PC-3 (cell line): ENCODE measurements at regions of chr10 and their contacts with region 1.

Region 1: GRCh38 chr10:62582804-62583208 is 208.6 kb downstream of the ZNF365 start:
- DNase-seq: peak; percentile 86
- ATAC-seq: peak; percentile 77
- H3K4me3 ChIP-seq: no peak overlapping the region
- H3K27ac ChIP-seq: peak overlapping the region; percentile 1; the same call in 1 of the 2 replicates
- H3K4me1 ChIP-seq: peaks cover 11% of the 10 kb centered on the region
- H3K27me3 ChIP-seq: no peaks in the 10 kb centered on the region
- CTCF ChIP-seq: no peak

Region 2: DNA sequence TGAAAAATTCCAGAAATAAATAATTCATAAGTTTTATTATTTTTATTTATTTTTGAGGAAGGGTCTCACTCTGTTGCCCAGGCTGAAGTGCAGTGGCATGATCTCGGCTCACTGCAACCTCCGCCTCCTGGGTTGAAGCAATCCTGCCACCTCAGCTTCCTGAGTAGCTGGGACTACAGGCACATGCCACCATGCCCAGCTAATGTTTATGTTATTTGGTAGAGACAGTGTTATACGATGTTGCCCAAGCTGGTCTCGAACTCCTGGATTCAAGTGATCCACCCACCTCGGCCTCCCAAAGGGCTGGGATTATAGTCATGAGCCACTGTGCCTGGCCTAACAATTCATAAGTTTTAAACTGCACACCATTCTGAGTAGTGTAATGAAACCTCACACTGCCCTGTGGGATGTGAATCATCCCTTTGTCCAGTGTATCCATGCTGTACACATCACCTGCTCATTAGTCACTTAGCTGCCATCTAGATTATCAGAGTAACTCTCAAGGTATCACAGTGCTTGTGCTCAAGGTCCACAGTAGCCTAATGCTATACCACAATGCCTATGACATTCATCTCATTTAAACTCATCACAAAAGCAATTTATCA is 332.1 kb before region 1 on chr10:
- CTCF ChIA-PET with region 1: no interaction called
- POLR2A ChIA-PET with region 1: no interaction called
- intact Hi-C with region 1: loop called (anchors 2 kb)
- DNase-seq: peak; percentile 100
- ATAC-seq: peak; percentile 98
- H3K4me3 ChIP-seq: no peak overlapping the region
- H3K27ac ChIP-seq: peak overlapping the region; percentile 44
- H3K4me1 ChIP-seq: peaks cover 47% of the 10 kb centered on the region
- H3K27me3 ChIP-seq: no peaks in the 10 kb centered on the region
- CTCF ChIP-seq: no peak

Region 3: DNA sequence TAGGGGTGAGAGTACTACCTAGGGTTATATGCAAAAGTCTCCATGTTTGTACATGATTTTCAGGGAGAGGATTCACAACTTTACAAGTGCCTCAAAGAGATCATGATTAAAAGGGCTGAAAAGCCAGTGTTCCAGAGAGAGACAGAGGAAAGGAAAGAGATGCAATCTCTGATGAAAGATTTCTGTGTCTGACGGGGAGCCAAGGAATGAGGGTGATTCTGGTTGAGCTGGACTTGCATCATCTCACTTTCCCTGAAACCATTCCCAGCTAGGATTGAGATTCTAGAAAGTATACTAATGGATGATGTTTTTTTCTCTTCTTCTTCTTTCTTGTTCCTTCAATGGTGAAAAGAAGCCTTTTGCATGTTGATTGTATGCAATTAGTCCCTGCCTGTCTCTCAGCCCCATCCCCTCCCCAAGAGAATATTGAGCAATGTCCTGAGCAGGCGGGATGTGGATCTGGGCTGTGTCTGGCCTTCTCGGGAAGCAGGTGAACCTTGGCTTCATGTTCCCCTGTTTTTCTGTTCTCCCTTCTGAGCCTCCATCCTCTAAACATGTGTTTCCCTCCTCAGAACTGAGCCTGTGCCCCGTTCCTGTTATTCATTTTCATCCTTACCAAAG is 22.5 kb before region 1 on chr10:
- CTCF ChIA-PET with region 1: no interaction called
- POLR2A ChIA-PET with region 1: no interaction called
- intact Hi-C with region 1: loop called (anchors 1 kb)
- DNase-seq: peak; percentile 42
- ATAC-seq: no peak
- H3K4me3 ChIP-seq: no peak overlapping the region
- H3K27ac ChIP-seq: no peak overlapping the region
- H3K4me1 ChIP-seq: peaks cover 10% of the 10 kb centered on the region
- H3K27me3 ChIP-seq: no peaks in the 10 kb centered on the region
- CTCF ChIP-seq: no peak

Region 4: GRCh38 chr10:63521416-63522276 is 938.8 kb after region 1 on chr10:
- CTCF ChIA-PET with region 1: no interaction called
- POLR2A ChIA-PET with region 1: no interaction called
- intact Hi-C with region 1: no loop called
- DNase-seq: peak; percentile 94
- ATAC-seq: peak; percentile 58
- H3K4me3 ChIP-seq: peak overlapping the region; percentile 75
- H3K27ac ChIP-seq: peak overlapping the region; percentile 85
- H3K4me1 ChIP-seq: peaks cover 65% of the 10 kb centered on the region
- H3K27me3 ChIP-seq: no peaks in the 10 kb centered on the region
- CTCF ChIP-seq: no peak